ENCODE measurements at regions of chr11 and their contacts with region 1.

Region 1: DNA sequence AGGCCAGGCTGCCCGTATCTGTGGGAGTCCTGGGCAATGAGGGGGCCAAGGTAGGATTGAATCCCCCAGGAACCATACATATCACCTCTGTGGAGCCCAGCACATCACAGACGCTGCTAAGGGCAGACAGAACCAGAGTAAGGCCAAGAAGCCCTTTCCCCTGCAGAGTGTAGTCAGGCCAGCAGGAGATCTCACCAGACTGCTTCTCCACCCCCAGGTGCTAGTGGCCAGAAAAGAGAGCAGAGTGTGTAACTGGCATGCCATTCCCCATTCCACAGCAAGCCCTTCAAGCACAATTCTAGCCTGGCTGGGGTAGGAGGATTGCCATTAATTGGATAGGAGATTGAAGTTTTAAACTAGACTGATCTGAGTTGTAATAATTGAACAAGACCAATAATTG is 28.0 kb upstream of the FCHSD2 start:
- DNase-seq: no peak
- ATAC-seq: peak; percentile 45
- H3K4me3 ChIP-seq: no peak overlapping the region
- H3K27ac ChIP-seq: no peak overlapping the region
- H3K4me1 ChIP-seq: peaks cover 98% of the 10 kb centered on the region
- H3K27me3 ChIP-seq: no peaks in the 10 kb centered on the region
- CTCF ChIP-seq: no peak
- EP300 ChIP-seq: no peak
- POLR2A ChIP-seq: no peak
- RAD21 ChIP-seq: no peak

Region 2: GRCh38 chr11:73157053-73158010 is 12.8 kb before region 1 on chr11:
- CTCF ChIA-PET with region 1: no interaction called
- POLR2A ChIA-PET with region 1: interaction called, 78 read pairs
- in situ Hi-C with region 1: no loop called
- intact Hi-C with region 1: loop called (anchors 1 kb)
- DNase-seq: peak; percentile 59
- ATAC-seq: peak; percentile 29
- H3K4me3 ChIP-seq: peak overlapping the region; percentile 9 to 62 (median 23); a peak in 5 of 6 replicates
- H3K27ac ChIP-seq: peak overlapping the region; percentile 74
- H3K4me1 ChIP-seq: peaks cover 98% of the 10 kb centered on the region
- H3K27me3 ChIP-seq: no peaks in the 10 kb centered on the region
- CTCF ChIP-seq: peak; percentile 4; the same call in 1 of the 2 replicates
- EP300 ChIP-seq: no peak
- POLR2A ChIP-seq: no peak
- RAD21 ChIP-seq: no peak